ENCODE measurements at regions of chr3 and their contacts with region 1.

Region 1: DNA sequence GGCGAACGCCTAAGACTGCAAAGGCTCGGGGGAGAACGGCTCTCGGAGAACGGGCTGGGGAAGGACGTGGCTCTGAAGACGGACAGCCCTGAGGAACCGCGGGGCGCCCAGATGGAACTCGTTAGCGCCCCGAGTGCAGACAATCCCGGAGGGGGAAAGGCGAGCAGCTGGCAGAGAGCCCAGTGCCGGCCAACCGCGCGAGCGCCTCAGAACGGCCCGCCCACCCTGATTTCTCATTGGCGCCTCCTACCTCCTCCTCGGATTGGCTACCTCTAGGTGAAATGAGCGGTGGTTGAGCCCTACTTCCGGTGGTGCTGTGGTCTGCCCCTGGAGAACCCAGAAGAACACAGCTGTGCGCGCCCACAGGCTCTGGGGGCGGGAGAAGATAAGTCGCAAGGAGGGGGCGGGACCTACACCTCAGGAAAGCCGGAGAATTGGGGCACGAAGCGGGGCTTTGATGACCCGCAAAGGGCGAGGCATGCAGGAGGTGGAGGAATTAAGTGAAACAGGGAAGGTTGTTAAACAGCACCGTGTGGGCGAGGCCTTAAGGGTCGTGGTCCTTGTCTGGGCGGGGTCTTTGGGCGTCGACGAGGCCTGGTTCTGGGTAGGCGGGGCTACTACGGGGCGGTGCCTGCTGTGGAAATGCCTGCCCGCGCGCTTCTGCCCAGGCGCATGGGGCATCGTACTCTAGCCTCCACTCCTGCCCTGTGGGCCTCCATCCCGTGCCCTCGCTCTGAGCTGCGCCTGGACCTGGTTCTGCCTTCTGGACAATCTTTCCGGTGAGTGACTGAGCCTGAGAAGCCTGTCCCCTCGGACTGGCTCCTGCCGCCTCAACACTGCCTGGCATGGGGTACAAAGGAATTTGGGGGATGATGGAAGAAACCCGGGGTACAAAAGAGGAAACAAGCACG is at the start of gene OGG1:
- DNase-seq: peak; percentile 77 to 95 (median 94)
- ATAC-seq: peak; percentile 97
- H3K4me3 ChIP-seq: peak within 1 kb of the TSS; percentile 84
- H3K4me3 Mint-ChIP-seq: peak within 1 kb of the TSS; percentile 93 to 98 (median 96)
- H3K27ac ChIP-seq: peak within 1 kb of the TSS; percentile 73
- H3K27ac Mint-ChIP-seq: peak within 1 kb of the TSS; percentile 86 to 96 (median 93)
- H3K4me1 ChIP-seq: peaks cover 13 to 22% of the 10 kb centered on the region in 2 donors
- H3K4me1 Mint-ChIP-seq: peaks cover 30 to 58% (median 47%) of the 10 kb centered on the region in 7 donors
- H3K27me3 ChIP-seq: no peaks in the 10 kb centered on the region
- H3K27me3 Mint-ChIP-seq: no peaks in the 10 kb centered on the region
- total RNA-seq, gene OGG1: 18.8 to 42.9 (median 31.6) TPM

Region 2: GRCh38 chr3:9769426-9770275 is 19.8 kb after region 1 on chr3 and contains the start of gene CAMK1:
- CTCF ChIA-PET with region 1: no interaction called
- POLR2A ChIA-PET with region 1: interaction called, 3 read pairs
- intact Hi-C with region 1: loop called (anchors 1 kb)
- DNase-seq: peak in 8 of 9 donors; percentile 31 to 82 (median 49)
- ATAC-seq: peak; percentile 90
- H3K4me3 ChIP-seq: peak within 1 kb of the TSS; percentile 49
- H3K4me3 Mint-ChIP-seq: peak within 1 kb of the TSS; percentile 34 to 87 (median 68)
- H3K27ac ChIP-seq: peak within 1 kb of the TSS; percentile 43
- H3K27ac Mint-ChIP-seq: peak within 1 kb of the TSS; percentile 24 to 87 (median 57)
- H3K4me1 ChIP-seq: peaks cover 8 to 13% of the 10 kb centered on the region in 2 donors
- H3K4me1 Mint-ChIP-seq: peaks cover 13 to 45% (median 24%) of the 10 kb centered on the region in 7 donors
- H3K27me3 ChIP-seq: no peaks in the 10 kb centered on the region
- H3K27me3 Mint-ChIP-seq: peaks cover 0 to 3% (median 0%) of the 10 kb centered on the region in 5 donors
- total RNA-seq, gene CAMK1: 2.1 to 36.3 (median 2.5) TPM

Region 3: GRCh38 chr3:9809615-9810432 is 59.9 kb after region 1 on chr3 and contains the start of gene TTLL3:
- CTCF ChIA-PET with region 1: no interaction called
- POLR2A ChIA-PET with region 1: interaction called, 6 read pairs
- intact Hi-C with region 1: loop called in 1 of 2 experiments (anchors 1 kb)
- DNase-seq: peak; percentile 33 to 50 (median 43)
- ATAC-seq: peak; percentile 76
- H3K4me3 ChIP-seq: peak within 1 kb of the TSS; percentile 76
- H3K4me3 Mint-ChIP-seq: peak within 1 kb of the TSS; percentile 89 to 96 (median 92)
- H3K27ac ChIP-seq: peak within 1 kb of the TSS; percentile 90
- H3K27ac Mint-ChIP-seq: peak within 1 kb of the TSS; percentile 92 to 98 (median 96)
- H3K4me1 ChIP-seq: peaks cover 21 to 28% of the 10 kb centered on the region in 2 donors
- H3K4me1 Mint-ChIP-seq: peaks cover 31 to 41% (median 38%) of the 10 kb centered on the region in 7 donors
- H3K27me3 ChIP-seq: no peaks in the 10 kb centered on the region
- H3K27me3 Mint-ChIP-seq: no peaks in the 10 kb centered on the region
- total RNA-seq, gene TTLL3: 54.9 to 106 (median 68.0) TPM

Region 4: GRCh38 chr3:9986237-9986725 is 236.4 kb after region 1 on chr3:
- CTCF ChIA-PET with region 1: no interaction called
- POLR2A ChIA-PET with region 1: interaction called, 3 read pairs
- intact Hi-C with region 1: loop called in 1 of 2 experiments (anchors 1 kb)
- DNase-seq: no peak
- ATAC-seq: peak; percentile 52
- H3K4me3 ChIP-seq: peak overlapping the region; percentile 100
- H3K4me3 Mint-ChIP-seq: peak overlapping the region; percentile 95 to 99 (median 98)
- H3K27ac ChIP-seq: peak overlapping the region; percentile 96
- H3K27ac Mint-ChIP-seq: peak overlapping the region; percentile 95 to 100 (median 98)
- H3K4me1 ChIP-seq: peaks cover 13 to 15% of the 10 kb centered on the region in 2 donors
- H3K4me1 Mint-ChIP-seq: peaks cover 0 to 48% (median 35%) of the 10 kb centered on the region in 7 donors
- H3K27me3 ChIP-seq: no peaks in the 10 kb centered on the region
- H3K27me3 Mint-ChIP-seq: no peaks in the 10 kb centered on the region

Region 5: GRCh38 chr3:11410564-11410963 is 1660.7 kb after region 1 on chr3:
- CTCF ChIA-PET with region 1: no interaction called
- POLR2A ChIA-PET with region 1: no interaction called
- intact Hi-C with region 1: no loop called
- DNase-seq: no peak
- ATAC-seq: no peak
- H3K4me3 ChIP-seq: no peak overlapping the region
- H3K4me3 Mint-ChIP-seq: no peak overlapping the region
- H3K27ac ChIP-seq: no peak overlapping the region
- H3K27ac Mint-ChIP-seq: no peak overlapping the region
- H3K4me1 ChIP-seq: no peaks in the 10 kb centered on the region
- H3K4me1 Mint-ChIP-seq: peaks cover 0 to 15% (median 3%) of the 10 kb centered on the region in 7 donors
- H3K27me3 ChIP-seq: no peaks in the 10 kb centered on the region
- H3K27me3 Mint-ChIP-seq: no peaks in the 10 kb centered on the region

Measured in naive thymus-derived CD4-positive, alpha-beta T cell (primary cell).